ENCODE measurements at regions of chr17 and their contacts with region 1.

Region 1: DNA sequence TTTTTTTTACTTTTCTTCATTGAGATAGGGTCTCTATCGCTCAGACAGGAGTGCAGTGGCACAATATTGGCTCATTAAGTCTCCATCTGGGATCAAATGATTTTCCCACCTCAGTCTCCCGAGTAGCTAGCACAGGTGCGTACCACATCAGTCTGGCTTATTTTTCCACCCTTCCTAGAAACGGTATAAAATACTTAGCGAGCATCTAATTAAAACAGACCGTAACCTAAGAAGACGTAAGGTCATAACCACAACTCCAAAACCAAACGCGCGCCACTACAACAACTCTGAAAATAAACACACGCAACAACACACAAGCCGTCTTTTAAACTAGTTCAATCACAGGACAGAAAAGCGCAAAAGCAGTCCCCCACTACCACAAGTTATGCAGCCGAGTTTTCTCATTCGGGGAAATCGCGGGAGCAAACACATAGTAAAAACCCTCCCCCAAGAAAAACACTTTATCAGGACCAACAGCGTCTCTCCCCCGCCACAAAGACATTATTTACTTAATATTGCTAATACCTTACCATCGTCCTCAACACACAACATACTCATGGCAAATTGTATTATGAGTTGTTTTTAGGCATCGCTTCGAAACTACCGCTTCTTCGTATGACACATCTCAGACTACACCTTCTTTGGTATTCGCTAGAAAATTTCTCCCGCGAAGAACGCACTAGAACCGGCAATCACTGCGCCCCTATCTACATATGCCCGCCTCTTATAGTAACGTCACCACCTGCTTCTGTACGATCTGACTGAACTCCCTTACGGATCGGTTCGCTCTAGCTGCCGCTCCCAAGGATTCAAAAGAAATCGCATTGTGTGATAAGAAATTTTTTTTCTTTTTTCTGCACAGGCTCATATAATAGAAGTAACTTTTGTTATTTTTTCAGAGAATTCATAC is 32.8 kb downstream of the TEX14 start:
- DNase-seq: peak; percentile 92
- H3K4me3 ChIP-seq: peak overlapping the region; percentile 65
- H3K27ac ChIP-seq: peak overlapping the region; percentile 74
- H3K4me1 ChIP-seq: peaks cover 6% of the 10 kb centered on the region
- CTCF ChIP-seq: no peak; the same call in 1 of the 2 replicates

Region 2: GRCh38 chr17:58587702-58588254 is 71.3 kb before region 1 on chr17:
- CTCF ChIA-PET with region 1: no interaction called
- POLR2A ChIA-PET with region 1: no interaction called
- intact Hi-C with region 1: loop called (anchors 2 kb)
- DNase-seq: peak; percentile 73
- H3K4me3 ChIP-seq: no peak overlapping the region
- H3K27ac ChIP-seq: no peak overlapping the region
- H3K4me1 ChIP-seq: no peaks in the 10 kb centered on the region
- CTCF ChIP-seq: peak; percentile 98

Region 3: DNA sequence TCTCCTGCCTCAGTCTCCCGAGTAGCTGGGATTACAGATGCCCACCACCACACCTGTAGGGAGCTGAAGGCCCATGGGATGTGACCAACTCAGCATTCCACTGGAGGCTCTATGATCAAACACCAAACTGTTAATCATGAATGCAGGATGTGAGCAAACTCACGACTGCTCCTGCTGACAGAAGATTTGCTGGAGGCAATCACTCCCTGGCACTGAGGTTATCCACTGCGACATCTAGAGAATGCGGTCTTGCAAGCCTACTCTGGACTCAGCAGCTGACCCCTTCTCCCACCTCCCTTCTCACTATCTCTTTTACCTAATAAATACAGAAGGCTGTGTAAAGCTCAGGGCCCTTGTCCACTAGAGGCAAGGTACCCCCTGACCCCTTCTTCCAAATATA is 27.9 kb after region 1 on chr17:
- CTCF ChIA-PET with region 1: no interaction called
- POLR2A ChIA-PET with region 1: interaction called, 12 read pairs
- intact Hi-C with region 1: loop called (anchors 1 kb)
- DNase-seq: no peak
- H3K4me3 ChIP-seq: no peak overlapping the region
- H3K27ac ChIP-seq: no peak overlapping the region
- H3K4me1 ChIP-seq: peaks cover under 1% of the 10 kb centered on the region
- CTCF ChIP-seq: no peak

Region 4: DNA sequence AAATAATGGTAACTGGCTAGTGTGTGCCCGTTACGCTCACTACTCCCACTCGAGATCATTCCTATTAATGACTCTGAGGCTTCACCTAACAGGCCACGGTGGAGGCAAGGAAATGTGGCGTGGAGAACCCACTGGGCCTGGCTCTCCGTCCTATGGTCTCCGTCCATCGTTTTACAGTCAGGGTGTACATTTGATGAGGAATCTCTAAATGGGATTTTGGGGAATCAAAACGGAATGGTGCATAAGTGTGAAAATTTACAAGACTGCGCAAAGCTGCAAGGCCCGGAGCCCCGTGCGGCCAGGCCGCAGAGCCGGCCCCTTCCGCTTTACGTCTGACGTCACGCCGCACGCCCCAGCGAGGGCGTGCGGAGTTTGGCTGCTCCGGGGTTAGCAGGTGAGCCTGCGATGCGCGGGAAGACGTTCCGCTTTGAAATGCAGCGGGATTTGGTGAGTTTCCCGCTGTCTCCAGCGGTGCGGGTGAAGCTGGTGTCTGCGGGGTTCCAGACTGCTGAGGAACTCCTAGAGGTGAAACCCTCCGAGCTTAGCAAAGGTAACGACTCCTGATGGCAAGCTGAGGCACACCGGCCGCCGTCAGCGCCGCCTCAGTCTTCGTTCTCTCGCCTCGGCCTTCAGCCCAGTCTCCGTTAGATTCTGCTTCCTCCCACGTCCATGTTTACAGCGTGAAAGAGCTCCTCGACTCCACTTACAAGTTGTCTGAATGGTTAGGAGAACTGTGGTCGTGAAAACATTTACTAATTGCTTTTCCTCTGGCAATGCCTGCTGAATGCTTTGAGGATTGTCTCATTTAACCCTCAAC is 33.4 kb after region 1 on chr17 and contains the start of gene RAD51C:
- CTCF ChIA-PET with region 1: no interaction called
- POLR2A ChIA-PET with region 1: interaction called, 4 read pairs
- intact Hi-C with region 1: loop called (anchors 1 kb)
- DNase-seq: peak; percentile 93
- H3K4me3 ChIP-seq: peak within 1 kb of the TSS; percentile 84
- H3K27ac ChIP-seq: peak within 1 kb of the TSS; percentile 67
- H3K4me1 ChIP-seq: peaks cover 23% of the 10 kb centered on the region
- CTCF ChIP-seq: no peak
- total RNA-seq, gene RAD51C: 51.0 and 69.1 TPM in 2 replicates

Region 5: GRCh38 chr17:58741121-58741625 is 82.1 kb after region 1 on chr17:
- CTCF ChIA-PET with region 1: no interaction called
- POLR2A ChIA-PET with region 1: no interaction called
- intact Hi-C with region 1: no loop called
- DNase-seq: no peak
- H3K4me3 ChIP-seq: no peak overlapping the region
- H3K27ac ChIP-seq: no peak overlapping the region
- H3K4me1 ChIP-seq: peaks cover 5% of the 10 kb centered on the region
- CTCF ChIP-seq: no peak